GM12878 (cell line): ENCODE measurements at regions of chr6 and their contacts with region 1.

Region 1: GRCh38 chr6:42043787-42044475 is 6.4 kb upstream of the TAF8 start:
- DNase-seq: peak; percentile 68
- ATAC-seq: peak; percentile 79
- H3K4me3 ChIP-seq: peak overlapping the region; percentile 2; the same call in 1 of the 2 replicates
- H3K27ac ChIP-seq: peak overlapping the region; percentile 25; the same call in 1 of the 2 replicates
- H3K4me1 ChIP-seq: peaks cover 43% of the 10 kb centered on the region
- H3K27me3 ChIP-seq: no peaks in the 10 kb centered on the region
- CTCF ChIP-seq: peak; percentile 95 to 99 (median 98); a peak in 5 of 6 replicates
- EP300 ChIP-seq: no peak
- POLR2A ChIP-seq: no peak
- RAD21 ChIP-seq: peak; percentile 100

Region 2: GRCh38 chr6:41779793-41780545 is 264.0 kb before region 1 on chr6 and contains the start of gene FRS3:
- CTCF ChIA-PET with region 1: interaction called, 141 read pairs
- POLR2A ChIA-PET with region 1: no interaction called
- RAD21 ChIA-PET with region 1: interaction called, 80 read pairs
- SMC1A ChIA-PET with region 1: interaction called, 54 read pairs
- in situ Hi-C with region 1: loop called (anchors 5 kb)
- intact Hi-C with region 1: loop called (anchors 1 kb)
- DNase-seq: peak; percentile 78
- ATAC-seq: peak; percentile 95
- H3K4me3 ChIP-seq: peak within 1 kb of the TSS; percentile 74
- H3K27ac ChIP-seq: no peak within 1 kb of the TSS
- H3K4me1 ChIP-seq: peaks cover 18% of the 10 kb centered on the region
- H3K27me3 ChIP-seq: no peaks in the 10 kb centered on the region
- CTCF ChIP-seq: peak; percentile 94 to 99 (median 97); a peak in 5 of 6 replicates
- EP300 ChIP-seq: 0 out of 4 replicates have a peak, but pooled peaks of 1 of the 2 experiments have one; percentile 30
- POLR2A ChIP-seq: no peak
- RAD21 ChIP-seq: peak; percentile 97
- polyA plus RNA-seq, gene FRS3: 0.05 to 0.09 TPM

Region 3: DNA sequence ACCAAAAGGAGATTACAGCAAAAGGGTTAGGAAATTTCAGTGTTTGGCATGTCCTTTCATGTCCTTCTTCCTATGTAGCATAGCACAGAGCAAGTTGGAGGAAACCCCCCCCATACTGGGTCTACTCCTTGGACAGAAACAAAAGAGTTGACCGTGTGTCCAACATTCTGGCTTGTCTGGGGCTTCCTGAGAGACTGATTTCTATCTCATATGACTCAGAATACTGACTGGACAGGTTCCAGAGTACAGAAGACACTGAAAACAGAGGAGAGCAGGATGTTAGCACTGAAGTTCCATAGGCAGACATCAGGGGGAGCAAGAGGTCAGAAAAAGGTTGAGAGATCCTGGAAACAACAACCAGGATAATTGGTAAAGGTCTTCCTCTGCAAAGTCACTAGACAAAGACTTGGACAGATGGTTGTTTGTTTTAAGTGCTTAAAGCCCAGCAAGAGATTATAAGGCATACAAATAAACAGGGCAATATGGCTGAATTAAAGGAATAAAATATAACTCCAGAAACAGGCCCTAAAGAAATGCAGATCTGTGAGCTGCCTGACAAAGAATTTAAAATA is 197.2 kb before region 1 on chr6:
- CTCF ChIA-PET with region 1: interaction called, 181 read pairs
- POLR2A ChIA-PET with region 1: no interaction called
- RAD21 ChIA-PET with region 1: interaction called, 46 read pairs
- SMC1A ChIA-PET with region 1: interaction called, 114 read pairs
- in situ Hi-C with region 1: loop called (anchors 5 kb)
- intact Hi-C with region 1: loop called (anchors 1 kb)
- DNase-seq: peak; percentile 34
- ATAC-seq: peak; percentile 95
- H3K4me3 ChIP-seq: no peak overlapping the region
- H3K27ac ChIP-seq: peak overlapping the region; percentile 41
- H3K4me1 ChIP-seq: peaks cover 2% of the 10 kb centered on the region; the same call in 1 of the 2 replicates
- H3K27me3 ChIP-seq: no peaks in the 10 kb centered on the region
- CTCF ChIP-seq: peak; percentile 79 to 82 (median 80)
- EP300 ChIP-seq: no peak
- POLR2A ChIP-seq: no peak
- RAD21 ChIP-seq: peak; percentile 85

Region 4: DNA sequence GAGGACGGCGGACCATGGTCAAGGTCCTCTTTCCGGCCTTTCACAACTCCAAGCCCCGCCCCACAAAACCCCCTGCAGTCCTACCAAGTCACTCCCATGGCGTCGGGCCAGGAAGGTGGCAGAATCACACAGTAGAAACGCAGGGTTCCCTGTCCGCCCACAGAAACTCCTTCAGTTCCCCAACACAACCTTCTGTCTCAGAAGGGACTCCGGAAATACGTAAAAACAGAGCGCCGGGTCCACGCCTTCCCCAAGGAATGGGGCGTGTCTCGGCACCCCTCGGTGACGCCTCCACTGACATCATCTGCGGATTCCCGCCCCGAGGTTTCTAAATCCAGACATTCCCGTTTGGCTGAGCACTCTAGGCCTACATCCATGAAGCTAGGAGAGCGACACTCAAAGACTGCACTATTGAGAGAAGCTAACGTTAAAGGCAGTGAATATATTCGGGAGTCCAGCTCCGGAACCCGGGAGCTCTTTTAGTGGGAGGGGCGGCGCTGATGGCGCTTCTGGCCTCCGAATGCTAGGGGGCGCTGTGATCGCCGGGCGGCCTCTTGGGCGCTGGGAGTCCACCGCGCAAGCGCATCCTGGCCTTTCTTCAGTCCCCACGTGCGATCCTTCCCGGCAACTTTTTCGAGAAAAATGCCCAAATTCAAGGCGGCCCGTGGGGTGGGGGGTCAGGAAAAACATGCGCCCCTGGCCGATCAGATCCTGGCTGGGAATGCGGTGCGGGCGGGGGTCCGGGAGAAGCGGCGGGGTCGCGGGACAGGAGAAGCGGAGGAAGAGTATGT is 122.8 kb before region 1 on chr6 and contains the starts of genes BYSL and MED20:
- CTCF ChIA-PET with region 1: interaction called, 90 read pairs
- POLR2A ChIA-PET with region 1: interaction called, 3 read pairs
- RAD21 ChIA-PET with region 1: interaction called, 23 read pairs
- SMC1A ChIA-PET with region 1: interaction called, 23 read pairs
- in situ Hi-C with region 1: no loop called
- intact Hi-C with region 1: loop called (anchors 1 kb)
- DNase-seq: peak; percentile 83
- ATAC-seq: peak; percentile 91
- H3K4me3 ChIP-seq: peak within 1 kb of the TSS; percentile 67
- H3K27ac ChIP-seq: peak within 1 kb of the TSS; percentile 95
- H3K4me1 ChIP-seq: peaks cover 4% of the 10 kb centered on the region; the same call in 1 of the 2 replicates
- H3K27me3 ChIP-seq: no peaks in the 10 kb centered on the region
- CTCF ChIP-seq: peak; percentile 92 to 98 (median 94)
- EP300 ChIP-seq: 0 out of 4 replicates have a peak, but pooled peaks have one; percentile 35 to 57
- POLR2A ChIP-seq: peak; percentile 81
- RAD21 ChIP-seq: no peak
- polyA plus RNA-seq, gene BYSL: 12.6 to 28.4 TPM
- polyA plus RNA-seq, gene MED20: 15.9 to 21.7 TPM

Region 5: DNA sequence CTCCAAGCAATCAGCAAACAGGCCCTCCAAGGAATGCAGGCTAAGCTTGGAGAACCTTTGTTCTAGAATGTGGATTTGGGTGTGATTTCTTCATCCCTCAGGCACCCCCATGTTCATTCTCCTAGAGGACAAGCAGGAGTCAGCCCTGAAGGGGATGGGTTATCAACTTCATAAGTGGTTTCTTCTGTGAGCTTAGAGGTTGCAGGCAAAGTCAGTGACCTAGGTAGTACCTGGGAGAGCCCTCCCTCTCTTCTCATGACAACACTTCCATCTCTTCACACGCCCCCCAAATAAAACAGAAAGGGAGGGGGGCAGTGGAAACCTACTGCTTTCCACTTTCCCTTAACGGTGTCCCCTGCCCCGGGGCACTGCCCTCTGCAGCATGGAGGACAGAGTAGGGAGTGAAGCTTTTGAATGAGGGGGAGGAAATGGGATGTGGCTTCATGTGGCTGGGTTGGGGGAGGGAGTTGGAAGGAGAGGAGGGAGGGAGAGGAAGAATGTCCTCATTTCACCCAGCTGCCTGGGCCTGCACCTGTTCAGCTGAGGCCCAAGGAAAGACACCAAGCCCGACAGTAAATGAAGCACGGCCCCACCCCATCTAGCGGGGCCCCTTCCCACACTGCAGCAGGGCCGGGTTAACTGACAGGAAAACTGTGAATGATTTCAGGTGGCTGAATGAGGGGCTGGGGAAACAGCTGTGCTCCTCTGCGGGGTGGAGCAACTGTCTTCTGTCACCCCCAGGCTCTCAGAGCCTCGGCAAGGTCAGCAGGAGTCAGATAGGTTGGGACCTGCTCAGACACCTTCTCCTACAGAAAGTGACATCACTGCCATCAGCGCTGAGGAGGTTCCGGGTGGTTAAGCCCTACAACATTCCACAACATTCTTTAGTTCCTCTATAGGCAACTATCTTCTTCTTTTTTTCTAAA is 33.7 kb before region 1 on chr6:
- CTCF ChIA-PET with region 1: interaction called, 3 read pairs
- POLR2A ChIA-PET with region 1: interaction called, 3 read pairs
- RAD21 ChIA-PET with region 1: interaction called, 4 read pairs
- SMC1A ChIA-PET with region 1: interaction called, 10 read pairs
- in situ Hi-C with region 1: no loop called
- intact Hi-C with region 1: no loop called
- DNase-seq: no peak
- ATAC-seq: peak; percentile 74
- H3K4me3 ChIP-seq: no peak overlapping the region
- H3K27ac ChIP-seq: peak overlapping the region; percentile 51
- H3K4me1 ChIP-seq: peaks cover 16% of the 10 kb centered on the region
- H3K27me3 ChIP-seq: no peaks in the 10 kb centered on the region
- CTCF ChIP-seq: no peak
- EP300 ChIP-seq: no peak
- POLR2A ChIP-seq: peak; percentile 48; the same call in 1 of the 2 replicates
- RAD21 ChIP-seq: no peak

Region 6: DNA sequence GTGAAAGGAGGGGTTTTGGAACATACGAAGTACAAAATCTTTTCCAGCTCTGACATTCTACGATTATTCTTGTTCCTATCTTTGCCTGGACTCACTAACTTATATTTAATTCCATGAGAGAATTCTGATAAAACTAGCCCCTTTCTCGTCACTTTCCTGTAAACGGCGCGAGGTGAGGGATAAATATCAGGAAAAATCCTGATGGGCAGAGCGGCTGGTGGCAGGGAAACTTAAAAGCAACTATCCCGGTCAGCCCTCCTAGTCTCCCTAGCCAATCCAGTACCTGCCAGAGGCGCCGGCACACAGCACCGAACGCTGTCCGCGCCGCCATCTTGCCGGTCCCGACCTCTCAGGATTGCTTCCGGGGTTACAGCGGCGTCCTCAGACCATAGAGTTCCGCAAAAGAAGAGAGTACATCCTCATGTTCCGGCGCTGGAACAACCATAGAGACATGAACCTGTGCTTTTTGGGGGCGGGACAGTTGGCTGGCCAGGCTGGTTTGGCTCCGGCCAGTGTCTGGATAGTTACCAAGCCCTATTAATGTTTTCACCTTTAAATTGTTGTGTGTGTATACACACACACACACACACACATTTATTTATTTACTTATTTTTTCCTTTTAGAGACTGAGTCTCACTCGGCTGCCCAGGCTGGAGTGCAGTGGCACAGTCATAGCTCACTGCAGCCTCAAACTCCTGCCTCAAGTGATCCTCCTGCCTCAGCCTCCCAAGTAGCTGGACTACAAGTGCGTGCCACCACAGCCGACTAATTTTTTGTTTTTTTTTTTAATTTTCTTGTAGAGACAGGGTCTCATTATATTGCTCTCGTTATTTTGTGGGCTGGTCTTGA is 173.8 kb after region 1 on chr6 and contains the start of gene MRPS10:
- CTCF ChIA-PET with region 1: interaction called, 22 read pairs
- POLR2A ChIA-PET with region 1: interaction called, 7 read pairs
- RAD21 ChIA-PET with region 1: interaction called, 5 read pairs
- SMC1A ChIA-PET with region 1: interaction called, 4 read pairs
- in situ Hi-C with region 1: no loop called
- intact Hi-C with region 1: no loop called
- DNase-seq: peak; percentile 74
- ATAC-seq: peak; percentile 98
- H3K4me3 ChIP-seq: peak within 1 kb of the TSS; percentile 85
- H3K27ac ChIP-seq: peak within 1 kb of the TSS; percentile 65
- H3K4me1 ChIP-seq: peaks cover 5% of the 10 kb centered on the region; the same call in 1 of the 2 replicates
- H3K27me3 ChIP-seq: no peaks in the 10 kb centered on the region
- CTCF ChIP-seq: no peak
- EP300 ChIP-seq: 0 out of 4 replicates have a peak, but pooled peaks of 1 of the 2 experiments have one; percentile 14
- POLR2A ChIP-seq: peak; percentile 97
- RAD21 ChIP-seq: no peak
- polyA plus RNA-seq, gene MRPS10: 70.4 to 83.3 TPM